ENCODE measurements at regions of chr16 and their contacts with region 1.

Region 1: DNA sequence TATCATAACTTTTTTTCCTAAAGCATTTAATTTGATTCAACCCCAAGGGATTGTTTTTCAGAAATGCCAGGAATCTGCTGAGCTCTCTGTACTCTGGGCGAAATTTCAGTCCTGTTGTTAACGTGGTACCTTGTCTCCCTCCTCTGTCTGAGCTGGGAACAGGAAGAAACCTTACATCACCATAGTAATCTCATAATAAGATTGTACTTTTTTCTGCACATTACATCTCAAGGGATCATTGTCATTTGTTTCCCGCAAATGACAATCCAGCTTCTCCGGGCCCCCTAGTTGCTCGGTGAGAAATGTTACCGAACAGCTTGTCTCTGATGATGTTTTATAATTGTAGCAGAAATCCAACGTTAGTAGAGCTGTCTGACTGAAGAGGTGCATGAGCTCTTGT is 152.7 kb upstream of the ERCC4 start:
- DNase-seq: no peak
- ATAC-seq: peak; percentile 27

Region 2: GRCh38 chr16:13795131-13795530 is 27.9 kb after region 1 on chr16:
- intact Hi-C with region 1: loop called (anchors 2 kb)
- DNase-seq: no peak
- ATAC-seq: peak; percentile 95

Measured in left ventricle myocardium superior (tissue), 1 donor.